GM10248 (cell line): ENCODE measurements at regions of chr1 and their contacts with region 1.

Region 1: GRCh38 chr1:160291248-160292220 is 6.6 kb upstream of the PEX19 start:
- DNase-seq: peak; percentile 64
- CTCF ChIP-seq: peak; percentile 75

Region 2: GRCh38 chr1:160098852-160099561 is 192.5 kb before region 1 on chr1:
- CTCF ChIA-PET with region 1: interaction called, 57 read pairs
- POLR2A ChIA-PET with region 1: no interaction called
- DNase-seq: peak; percentile 100
- CTCF ChIP-seq: no peak

Region 3: GRCh38 chr1:160205242-160206035 is 86.1 kb before region 1 on chr1 and contains the start of gene PEA15:
- CTCF ChIA-PET with region 1: interaction called, 52 read pairs
- POLR2A ChIA-PET with region 1: no interaction called
- DNase-seq: peak; percentile 89
- CTCF ChIP-seq: no peak

Region 4: DNA sequence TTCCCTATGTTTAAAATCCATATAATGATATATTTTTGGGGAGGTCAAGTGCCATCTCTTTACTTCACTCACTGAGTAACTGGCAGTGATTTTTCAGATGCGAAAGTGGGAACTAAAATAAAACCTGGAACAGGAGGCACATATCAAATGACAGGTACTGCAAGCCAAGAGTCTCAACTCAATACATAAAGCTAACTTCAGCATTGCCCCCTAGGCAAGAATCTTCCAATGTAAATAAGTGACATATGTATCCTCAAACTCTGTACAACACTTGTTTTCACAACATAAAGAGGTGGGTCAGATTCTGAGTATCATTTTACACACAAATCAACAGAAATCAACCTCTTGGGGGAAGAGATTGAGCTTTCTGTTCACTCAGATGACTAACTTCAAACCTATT is 47.3 kb before region 1 on chr1:
- CTCF ChIA-PET with region 1: interaction called, 36 read pairs
- POLR2A ChIA-PET with region 1: no interaction called
- DNase-seq: no peak
- CTCF ChIP-seq: no peak

Region 5: DNA sequence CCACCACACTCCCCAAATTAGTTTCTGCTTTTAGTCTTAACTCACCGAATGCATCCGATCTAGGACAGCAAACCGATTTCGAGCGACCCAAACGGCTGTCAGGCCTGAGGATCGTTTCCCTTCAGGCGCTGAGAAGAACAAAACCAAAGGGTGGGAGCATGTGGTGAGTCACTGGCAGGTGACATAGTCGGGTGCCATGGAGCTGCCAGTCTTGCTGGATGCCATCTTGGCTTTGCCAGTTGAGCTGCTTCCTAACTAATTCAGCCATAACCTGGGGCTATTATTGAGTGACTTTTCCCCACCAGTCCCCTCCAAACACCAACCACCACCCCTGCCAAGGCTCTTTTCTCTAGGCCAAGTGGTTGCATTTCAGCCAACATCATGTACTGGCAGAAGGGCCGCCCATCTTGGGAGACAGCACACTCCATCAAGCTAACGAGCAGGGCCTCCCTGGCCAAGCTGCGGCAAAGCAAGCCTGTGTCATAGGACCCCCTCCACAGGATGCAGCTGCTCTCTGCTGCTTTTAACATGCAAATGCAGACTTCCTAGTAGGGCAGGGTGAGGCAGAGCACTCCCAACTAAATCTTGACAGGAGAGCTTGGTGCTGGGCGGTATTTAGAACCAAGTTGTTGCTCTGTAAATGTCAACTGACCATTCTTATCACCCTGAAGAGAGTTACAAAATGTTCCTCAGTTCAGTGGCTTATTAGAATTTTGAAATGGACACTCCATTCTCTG is 15.8 kb after region 1 on chr1:
- CTCF ChIA-PET with region 1: interaction called, 65 read pairs
- POLR2A ChIA-PET with region 1: no interaction called
- DNase-seq: no peak
- CTCF ChIP-seq: no peak

Region 6: DNA sequence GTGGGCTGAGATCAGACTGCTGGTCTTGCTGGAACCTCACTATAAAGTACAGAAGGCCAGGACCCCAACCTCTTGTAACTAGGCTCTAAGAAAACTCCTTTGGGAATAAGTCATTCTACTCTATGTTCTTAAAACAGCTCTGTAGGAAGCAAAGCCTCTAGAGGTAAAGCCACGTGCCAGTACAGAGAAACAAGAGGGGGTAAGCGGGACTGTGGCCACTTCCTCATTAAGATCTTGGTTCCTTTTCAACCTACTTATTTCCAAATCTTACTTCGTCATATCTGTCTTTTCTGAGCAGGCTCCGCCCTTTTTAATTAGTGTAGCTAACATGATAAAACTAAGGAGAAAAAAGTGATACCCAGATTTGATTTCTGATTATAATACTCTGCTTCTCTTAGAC is 55.4 kb after region 1 on chr1:
- CTCF ChIA-PET with region 1: interaction called, 15 read pairs
- POLR2A ChIA-PET with region 1: interaction called, 4 read pairs
- DNase-seq: peak; percentile 69
- CTCF ChIP-seq: no peak